CD8-positive, alpha-beta T cell (primary cell): ENCODE measurements at regions of chr5 and their contacts with region 1.

Region 1: GRCh38 chr5:43313035-43313853 is at the start of gene HMGCS1:
- DNase-seq: peak; percentile 95 to 100 (median 98)
- ATAC-seq: peak; percentile 90
- H3K4me3 ChIP-seq: peak within 1 kb of the TSS; percentile 69 to 97
- H3K4me3 Mint-ChIP-seq: peak within 1 kb of the TSS; percentile 95
- H3K27ac ChIP-seq: peak within 1 kb of the TSS; percentile 84 to 98
- H3K27ac Mint-ChIP-seq: peak within 1 kb of the TSS; percentile 94
- H3K4me1 ChIP-seq: peaks cover 16% of the 10 kb centered on the region
- H3K4me1 Mint-ChIP-seq: peaks cover 40% of the 10 kb centered on the region
- H3K27me3 ChIP-seq: no peaks in the 10 kb centered on the region
- H3K27me3 Mint-ChIP-seq: no peaks in the 10 kb centered on the region
- CTCF ChIP-seq: peak; percentile 21
- total RNA-seq, gene HMGCS1: 74.1 to 74.7 TPM

Region 2: GRCh38 chr5:41869739-41870626 is 1443.3 kb before region 1 on chr5 and contains the start of gene OXCT1:
- CTCF ChIA-PET with region 1: no interaction called
- POLR2A ChIA-PET with region 1: interaction called, 5 read pairs
- intact Hi-C with region 1: loop called in 1 of 2 experiments (anchors 10 kb)
- DNase-seq: peak; percentile 87 to 97 (median 93)
- ATAC-seq: peak; percentile 94
- H3K4me3 ChIP-seq: peak within 1 kb of the TSS; percentile 90 to 98
- H3K4me3 Mint-ChIP-seq: peak within 1 kb of the TSS; percentile 92
- H3K27ac ChIP-seq: peak within 1 kb of the TSS; percentile 87 to 90
- H3K27ac Mint-ChIP-seq: peak within 1 kb of the TSS; percentile 98
- H3K4me1 ChIP-seq: peaks cover 24% of the 10 kb centered on the region
- H3K4me1 Mint-ChIP-seq: peaks cover 48% of the 10 kb centered on the region
- H3K27me3 ChIP-seq: no peaks in the 10 kb centered on the region
- H3K27me3 Mint-ChIP-seq: no peaks in the 10 kb centered on the region
- CTCF ChIP-seq: no peak
- total RNA-seq, gene OXCT1: 16.1 to 19.8 TPM

Region 3: DNA sequence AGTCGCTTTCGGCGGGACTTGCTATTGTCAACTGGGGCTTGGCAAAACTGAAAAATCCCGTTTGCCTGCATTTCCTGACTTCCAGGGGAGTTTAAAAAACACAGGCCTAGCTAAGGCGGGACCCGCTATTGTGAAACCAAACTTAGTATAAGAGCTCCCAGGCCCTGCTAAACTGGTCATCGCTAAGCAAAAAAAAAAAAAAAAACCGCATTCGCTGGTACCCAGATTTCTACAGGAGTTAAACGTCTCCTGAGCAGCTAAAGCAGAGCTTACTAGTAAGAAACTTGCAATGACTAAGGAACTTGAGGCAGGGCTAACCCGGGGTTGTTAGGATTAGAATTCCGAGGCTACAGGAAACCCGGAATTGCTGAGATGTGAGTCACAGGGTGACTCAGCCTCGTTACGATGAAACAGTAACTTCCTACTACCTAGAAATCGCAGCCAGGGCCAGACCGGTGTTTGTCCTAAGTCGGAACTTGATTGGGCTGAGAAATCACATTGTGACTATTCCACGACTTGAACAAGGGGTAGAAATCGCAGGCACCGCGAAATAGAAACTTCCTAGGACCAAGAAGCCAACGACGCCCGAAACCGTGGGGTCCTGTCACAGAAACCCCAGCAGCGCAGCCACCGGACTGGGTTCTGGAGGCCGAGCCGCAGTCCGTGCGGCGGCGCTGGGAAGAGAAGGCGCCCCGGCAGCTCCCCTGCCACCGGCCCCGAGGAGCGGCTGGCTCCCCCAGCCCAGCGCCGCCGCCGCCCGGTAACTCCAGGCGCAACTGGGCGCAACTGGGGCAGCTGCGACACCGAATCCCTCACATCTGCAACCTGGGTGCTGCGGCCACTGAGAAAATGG is 362.6 kb before region 1 on chr5:
- CTCF ChIA-PET with region 1: no interaction called
- POLR2A ChIA-PET with region 1: interaction called, 3 read pairs
- intact Hi-C with region 1: loop called in 1 of 2 experiments (anchors 1 kb)
- DNase-seq: peak; percentile 26 to 90 (median 72)
- ATAC-seq: peak; percentile 43
- H3K4me3 ChIP-seq: peak overlapping the region; percentile 72 to 83
- H3K4me3 Mint-ChIP-seq: peak overlapping the region; percentile 94
- H3K27ac ChIP-seq: peak overlapping the region; percentile 93 to 94
- H3K27ac Mint-ChIP-seq: peak overlapping the region; percentile 99
- H3K4me1 ChIP-seq: peaks cover 20% of the 10 kb centered on the region
- H3K4me1 Mint-ChIP-seq: peaks cover 34% of the 10 kb centered on the region
- H3K27me3 ChIP-seq: no peaks in the 10 kb centered on the region
- H3K27me3 Mint-ChIP-seq: no peaks in the 10 kb centered on the region
- CTCF ChIP-seq: no peak

Region 4: GRCh38 chr5:43040287-43041098 is 272.8 kb before region 1 on chr5 and contains the start of gene ANXA2R:
- CTCF ChIA-PET with region 1: no interaction called
- POLR2A ChIA-PET with region 1: interaction called, 21 read pairs
- intact Hi-C with region 1: loop called in 1 of 2 experiments (anchors 1 kb)
- DNase-seq: peak; percentile 88 to 98 (median 93)
- ATAC-seq: peak; percentile 58
- H3K4me3 ChIP-seq: peak within 1 kb of the TSS; percentile 86 to 87
- H3K4me3 Mint-ChIP-seq: peak within 1 kb of the TSS; percentile 93
- H3K27ac ChIP-seq: peak within 1 kb of the TSS; percentile 93 to 94
- H3K27ac Mint-ChIP-seq: peak within 1 kb of the TSS; percentile 98
- H3K4me1 ChIP-seq: peaks cover 27% of the 10 kb centered on the region
- H3K4me1 Mint-ChIP-seq: peaks cover 56% of the 10 kb centered on the region
- H3K27me3 ChIP-seq: no peaks in the 10 kb centered on the region
- H3K27me3 Mint-ChIP-seq: no peaks in the 10 kb centered on the region
- CTCF ChIP-seq: peak; percentile 79
- total RNA-seq, gene ANXA2R: 38.2 to 39.5 TPM

Region 5: GRCh38 chr5:43389679-43390329 is 76.6 kb after region 1 on chr5:
- CTCF ChIA-PET with region 1: interaction called, 14 read pairs
- POLR2A ChIA-PET with region 1: interaction called, 7 read pairs
- intact Hi-C with region 1: loop called in 1 of 2 experiments (anchors 5 kb)
- DNase-seq: peak in 7 of 9 experiments; percentile 11 to 73 (median 43)
- ATAC-seq: peak; percentile 64
- H3K4me3 ChIP-seq: no peak overlapping the region
- H3K4me3 Mint-ChIP-seq: no peak overlapping the region
- H3K27ac ChIP-seq: no peak overlapping the region
- H3K27ac Mint-ChIP-seq: no peak overlapping the region
- H3K4me1 ChIP-seq: no peaks in the 10 kb centered on the region
- H3K4me1 Mint-ChIP-seq: peaks cover 35% of the 10 kb centered on the region
- H3K27me3 ChIP-seq: no peaks in the 10 kb centered on the region
- H3K27me3 Mint-ChIP-seq: no peaks in the 10 kb centered on the region
- CTCF ChIP-seq: peak; percentile 87

Region 6: GRCh38 chr5:43556857-43557542 is 243.8 kb after region 1 on chr5 and contains the start of gene PAIP1:
- CTCF ChIA-PET with region 1: no interaction called
- POLR2A ChIA-PET with region 1: no interaction called
- intact Hi-C with region 1: loop called (anchors 1 to 2 kb)
- DNase-seq: peak; percentile 67 to 92 (median 83)
- ATAC-seq: peak; percentile 81
- H3K4me3 ChIP-seq: peak within 1 kb of the TSS; percentile 73 to 88
- H3K4me3 Mint-ChIP-seq: peak within 1 kb of the TSS; percentile 90
- H3K27ac ChIP-seq: peak within 1 kb of the TSS; percentile 82 to 93
- H3K27ac Mint-ChIP-seq: peak within 1 kb of the TSS; percentile 97
- H3K4me1 ChIP-seq: peaks cover 45% of the 10 kb centered on the region
- H3K4me1 Mint-ChIP-seq: peaks cover 13% of the 10 kb centered on the region
- H3K27me3 ChIP-seq: no peaks in the 10 kb centered on the region
- H3K27me3 Mint-ChIP-seq: peaks cover 2% of the 10 kb centered on the region
- CTCF ChIP-seq: peak; percentile 77
- total RNA-seq, gene PAIP1: 40.3 to 45.7 TPM